Cardiac septum (tissue), 1 donor: ENCODE measurements at regions of chr18 and their contacts with region 1.

Region 1: DNA sequence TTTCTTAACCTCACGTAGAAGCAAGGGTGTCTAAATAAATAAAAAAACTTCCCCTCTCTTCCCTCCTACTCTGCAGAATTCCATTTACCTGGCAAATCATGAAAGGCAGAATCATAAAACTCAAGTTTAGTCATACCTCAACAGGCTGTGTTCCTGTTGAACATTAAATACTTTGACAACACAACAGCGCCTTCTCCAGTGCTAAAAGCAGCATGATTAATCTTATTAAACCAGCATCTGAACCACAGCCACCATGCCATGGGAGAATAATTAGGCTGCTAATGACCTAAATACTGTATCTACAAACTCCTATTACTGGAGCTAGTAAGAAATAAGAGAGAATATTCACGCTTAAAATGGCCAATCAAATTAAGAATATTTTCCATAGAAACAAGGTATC is 68.1 kb downstream of the CDH2 start:
- DNase-seq: no peak

Region 2: GRCh38 chr18:27778441-27778840 is 330.4 kb before region 1 on chr18:
- intact Hi-C with region 1: loop called (anchors 10 kb)
- DNase-seq: no peak

Region 3: DNA sequence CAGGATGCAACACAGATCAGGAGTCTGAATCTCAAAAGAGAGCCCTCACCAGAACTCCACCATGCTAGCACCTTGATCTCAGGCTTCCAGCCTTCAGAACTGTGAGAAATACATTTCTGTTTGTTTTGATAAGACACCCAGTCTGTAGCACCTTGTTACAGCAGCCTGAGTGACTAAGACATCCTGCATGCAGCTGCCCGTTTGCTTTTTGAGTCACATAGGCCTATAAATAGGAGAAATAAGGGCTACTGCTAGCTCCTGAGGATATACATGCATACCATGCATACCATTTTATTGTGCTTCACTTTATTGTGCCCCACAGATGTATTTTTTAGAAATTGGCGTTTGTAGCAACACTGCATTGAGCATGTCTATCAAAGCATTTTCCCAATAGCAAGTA is 269.7 kb before region 1 on chr18:
- intact Hi-C with region 1: no loop called
- DNase-seq: no peak

Region 4: GRCh38 chr18:27860701-27861107 is 248.1 kb before region 1 on chr18:
- intact Hi-C with region 1: loop called (anchors 10 kb)
- DNase-seq: no peak